ENCODE measurements at regions of chr5 and their contacts with region 1.

Region 1: DNA sequence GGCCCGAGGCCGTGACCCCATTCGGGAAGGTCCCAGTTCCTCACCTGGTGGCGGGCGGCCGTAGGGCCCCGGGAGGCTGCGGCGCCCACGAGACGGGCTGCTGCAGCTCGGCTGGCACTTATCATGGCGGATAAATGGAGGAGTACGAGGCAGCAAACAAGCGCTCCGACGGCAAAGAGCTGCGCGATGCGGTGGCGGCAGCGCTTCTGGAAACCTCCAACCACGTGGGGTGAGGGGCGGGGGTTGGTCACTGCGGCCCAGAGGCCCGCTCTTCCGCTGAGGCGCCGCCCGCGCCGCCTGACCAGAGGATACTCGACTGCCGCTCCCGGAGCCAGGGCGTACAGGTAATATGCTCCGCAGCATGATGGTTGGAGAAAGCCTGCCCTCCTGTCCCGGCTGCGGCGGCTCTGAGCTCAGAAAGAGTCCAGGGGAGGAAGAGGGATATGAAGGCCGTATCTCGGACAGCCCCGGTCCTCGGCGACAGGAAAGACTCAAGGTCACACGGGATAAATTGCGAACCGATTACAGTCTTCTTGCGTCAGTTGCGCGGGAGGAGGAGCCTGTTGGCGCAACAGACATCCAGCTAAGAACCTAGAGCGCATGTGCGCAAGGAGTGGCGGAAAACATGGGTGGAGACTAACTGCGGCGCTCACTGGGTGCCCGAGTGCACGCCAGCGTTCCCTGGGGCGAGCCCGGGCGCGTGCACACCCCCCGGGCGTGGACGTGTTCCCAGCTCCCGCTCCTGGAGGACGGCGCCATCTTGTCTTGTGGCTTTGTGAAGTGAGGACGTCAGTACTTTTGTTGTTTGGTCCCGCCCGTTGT is at the start of gene HSPA9:
- DNase-seq: peak; percentile 96 to 98
- H3K4me3 ChIP-seq: peak within 1 kb of the TSS; percentile 77 to 97 (median 88)
- H3K27ac ChIP-seq: peak within 1 kb of the TSS; percentile 96 to 99
- H3K4me1 ChIP-seq: no peaks in the 10 kb centered on the region
- H3K27me3 ChIP-seq: no peaks in the 10 kb centered on the region
- CTCF ChIP-seq: peak in 2 of 3 donors; percentile 19 to 37
- POLR2A ChIP-seq: peak; percentile 75
- total RNA-seq, gene HSPA9: 236 to 288 (median 266) TPM

Region 2: GRCh38 chr5:138610918-138611677 is 35.7 kb after region 1 on chr5:
- intact Hi-C with region 1: no loop called
- DNase-seq: no peak
- H3K4me3 ChIP-seq: peak overlapping the region; percentile 24 to 57 (median 40)
- H3K27ac ChIP-seq: peak overlapping the region; percentile 91 to 93
- H3K4me1 ChIP-seq: peaks cover 0 to 20% of the 10 kb centered on the region in 2 donors
- H3K27me3 ChIP-seq: no peaks in the 10 kb centered on the region
- CTCF ChIP-seq: no peak
- POLR2A ChIP-seq: no peak

Region 3: DNA sequence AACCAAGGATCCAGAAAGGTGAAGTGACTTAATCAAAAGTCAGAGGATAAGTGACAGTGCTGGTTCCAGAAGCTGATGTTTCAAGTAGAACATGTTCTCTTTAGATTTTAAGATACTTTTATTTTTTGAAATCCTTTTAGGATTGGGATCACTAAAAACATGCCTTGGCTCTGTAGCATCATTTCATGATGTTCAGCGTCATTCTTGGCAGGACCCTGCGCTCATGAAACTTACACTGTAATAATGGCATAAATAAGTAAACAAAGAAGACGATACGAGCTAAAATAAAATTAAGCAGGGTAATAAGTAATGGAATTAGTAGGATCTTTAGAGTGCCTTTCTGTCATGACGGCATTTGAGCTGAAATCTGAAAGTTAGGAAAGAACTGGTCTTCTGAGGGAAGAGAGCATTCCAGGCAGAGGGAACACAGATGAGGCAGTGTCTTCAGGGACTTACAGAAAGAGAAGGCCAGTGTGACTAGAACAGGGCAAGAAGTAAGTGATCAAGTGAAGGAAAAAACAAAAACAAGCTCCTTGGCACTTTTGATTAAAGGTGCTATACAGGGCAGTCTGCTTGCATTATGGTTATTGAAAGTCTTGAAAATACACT is 197.7 kb after region 1 on chr5:
- intact Hi-C with region 1: no loop called
- DNase-seq: no peak
- H3K4me3 ChIP-seq: peak overlapping the region in 1 of 3 donors; percentile 1
- H3K27ac ChIP-seq: peak overlapping the region in 1 of 2 donors; percentile 26
- H3K4me1 ChIP-seq: no peaks in the 10 kb centered on the region
- H3K27me3 ChIP-seq: no peaks in the 10 kb centered on the region
- CTCF ChIP-seq: no peak
- POLR2A ChIP-seq: no peak

Region 4: GRCh38 chr5:139262742-139263445 is 687.5 kb after region 1 on chr5:
- intact Hi-C with region 1: loop called (anchors 10 kb)
- DNase-seq: peak; percentile 82 to 86
- H3K4me3 ChIP-seq: no peak overlapping the region
- H3K27ac ChIP-seq: no peak overlapping the region
- H3K4me1 ChIP-seq: no peaks in the 10 kb centered on the region
- H3K27me3 ChIP-seq: no peaks in the 10 kb centered on the region
- CTCF ChIP-seq: peak; percentile 52 to 90 (median 89)
- POLR2A ChIP-seq: no peak

Measured in breast epithelium (tissue), 4 donors.